PC-9 (cell line): ENCODE measurements at regions of chr12 and their contacts with region 1.

Region 1: GRCh38 chr12:24852420-24852819 is 96.5 kb downstream of the BCAT1 start:
- DNase-seq: no peak
- H3K4me3 ChIP-seq: no peak overlapping the region
- H3K27ac ChIP-seq: no peak overlapping the region
- H3K4me1 ChIP-seq: 0 out of 2 replicates have a peak, but pooled peaks cover 5% of the 10 kb centered on the region
- H3K27me3 ChIP-seq: no peaks in the 10 kb centered on the region
- CTCF ChIP-seq: peak; percentile 56

Region 2: GRCh38 chr12:24913953-24914352 is 61.5 kb after region 1 on chr12:
- CTCF ChIA-PET with region 1: interaction called, 10 read pairs
- POLR2A ChIA-PET with region 1: no interaction called
- intact Hi-C with region 1: no loop called
- DNase-seq: no peak
- H3K4me3 ChIP-seq: no peak overlapping the region
- H3K27ac ChIP-seq: no peak overlapping the region
- H3K4me1 ChIP-seq: no peaks in the 10 kb centered on the region
- H3K27me3 ChIP-seq: no peaks in the 10 kb centered on the region
- CTCF ChIP-seq: no peak

Region 3: DNA sequence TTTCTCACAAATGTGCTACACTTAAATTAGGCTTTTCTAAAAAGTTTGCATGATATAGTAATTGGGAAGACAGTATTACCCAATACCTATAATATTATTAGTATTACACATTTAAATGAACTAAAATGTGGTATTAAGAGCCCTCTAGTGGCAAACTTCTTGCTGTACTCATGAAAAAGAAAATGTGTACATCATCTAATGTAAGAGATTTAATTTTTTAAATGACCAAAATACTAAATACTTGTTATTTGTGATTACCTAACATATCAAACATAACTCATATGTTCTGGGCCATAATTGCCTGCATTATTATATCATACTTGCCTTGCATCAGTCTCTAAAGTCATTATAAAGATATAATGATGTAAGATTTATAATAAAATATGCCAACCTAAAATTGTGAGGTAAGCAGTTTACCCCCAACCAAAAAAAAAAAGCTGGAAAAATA is 278.3 kb after region 1 on chr12:
- CTCF ChIA-PET with region 1: no interaction called
- POLR2A ChIA-PET with region 1: no interaction called
- intact Hi-C with region 1: loop called (anchors 1 kb)
- DNase-seq: no peak
- H3K4me3 ChIP-seq: no peak overlapping the region
- H3K27ac ChIP-seq: no peak overlapping the region
- H3K4me1 ChIP-seq: no peaks in the 10 kb centered on the region
- H3K27me3 ChIP-seq: no peaks in the 10 kb centered on the region
- CTCF ChIP-seq: peak; percentile 85